IMR-90 (cell line): ENCODE measurements at regions of chr5 and their contacts with region 1.

Region 1: DNA sequence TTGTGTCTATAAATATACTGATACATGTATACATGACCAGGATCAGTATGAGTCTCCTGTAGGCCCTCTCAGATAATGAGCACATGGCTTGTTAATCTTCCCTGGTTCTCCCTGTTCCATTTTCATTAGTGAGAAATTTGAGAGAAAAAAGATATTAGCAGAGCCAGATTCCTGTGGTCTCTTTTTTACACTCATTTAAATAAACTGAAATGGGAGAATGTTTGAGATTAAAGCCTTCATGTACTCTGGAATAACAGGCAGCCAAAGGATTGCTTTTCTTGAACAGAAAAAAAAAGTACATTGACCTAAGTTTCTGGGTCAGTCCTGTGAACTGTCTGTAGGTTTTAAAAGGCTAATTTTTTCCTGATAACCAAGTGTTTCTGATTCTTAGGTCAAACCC is 44.2 kb downstream of the PWWP2A start:
- DNase-seq: peak; percentile 36
- ATAC-seq: peak; percentile 67
- H3K4me3 ChIP-seq: no peak overlapping the region
- H3K27ac ChIP-seq: no peak overlapping the region
- H3K4me1 ChIP-seq: peaks cover 5% of the 10 kb centered on the region
- H3K27me3 ChIP-seq: no peaks in the 10 kb centered on the region
- CTCF ChIP-seq: no peak
- POLR2A ChIP-seq: no peak
- RAD21 ChIP-seq: no peak

Region 2: DNA sequence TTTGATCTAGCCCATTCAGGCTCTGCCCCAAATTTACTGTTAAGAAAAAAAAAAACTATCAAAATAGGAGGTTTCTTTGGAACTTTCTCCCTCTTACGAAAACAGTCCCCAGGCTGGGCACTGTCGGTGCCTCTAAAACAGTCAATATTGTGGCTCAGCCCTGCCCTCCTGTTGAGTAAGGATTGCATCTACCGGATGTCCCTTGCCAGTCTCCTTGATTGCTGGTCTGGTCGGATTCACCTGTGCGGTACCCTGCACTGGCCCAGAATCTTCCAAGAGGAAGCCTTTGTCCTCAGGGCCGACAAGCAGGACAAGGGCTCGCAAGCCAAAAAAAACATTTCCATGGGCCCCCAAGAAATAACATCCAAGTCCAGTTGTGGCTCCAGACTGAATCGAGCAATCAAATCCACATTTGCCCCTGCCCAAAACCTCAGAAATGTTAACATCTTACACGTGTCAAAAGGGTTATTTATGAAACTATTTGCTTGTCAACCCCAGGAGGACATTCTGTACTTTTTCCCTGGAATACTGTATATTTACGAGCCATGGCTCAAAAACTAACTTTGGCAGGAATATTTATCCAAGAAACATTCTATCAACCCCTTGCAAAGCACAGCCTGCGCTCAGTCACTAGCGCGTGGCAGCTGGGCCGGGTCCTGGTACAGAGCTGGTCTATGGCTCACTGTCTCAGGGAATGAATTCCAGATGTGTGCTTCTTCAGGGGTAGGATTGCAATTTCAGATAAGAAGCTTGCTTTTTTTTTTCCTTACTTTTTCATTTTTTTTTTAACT is 288.0 kb before region 1 on chr5:
- CTCF ChIA-PET with region 1: no interaction called
- POLR2A ChIA-PET with region 1: no interaction called
- dilution Hi-C with region 1: no loop called
- in situ Hi-C with region 1: no loop called
- intact Hi-C with region 1: no loop called
- DNase-seq: peak; percentile 70
- ATAC-seq: peak; percentile 84
- H3K4me3 ChIP-seq: no peak overlapping the region
- H3K27ac ChIP-seq: no peak overlapping the region
- H3K4me1 ChIP-seq: peaks cover 5% of the 10 kb centered on the region
- H3K27me3 ChIP-seq: no peaks in the 10 kb centered on the region
- CTCF ChIP-seq: no peak
- POLR2A ChIP-seq: no peak
- RAD21 ChIP-seq: 0 out of 2 replicates have a peak, but pooled peaks have one; percentile 4

Region 3: DNA sequence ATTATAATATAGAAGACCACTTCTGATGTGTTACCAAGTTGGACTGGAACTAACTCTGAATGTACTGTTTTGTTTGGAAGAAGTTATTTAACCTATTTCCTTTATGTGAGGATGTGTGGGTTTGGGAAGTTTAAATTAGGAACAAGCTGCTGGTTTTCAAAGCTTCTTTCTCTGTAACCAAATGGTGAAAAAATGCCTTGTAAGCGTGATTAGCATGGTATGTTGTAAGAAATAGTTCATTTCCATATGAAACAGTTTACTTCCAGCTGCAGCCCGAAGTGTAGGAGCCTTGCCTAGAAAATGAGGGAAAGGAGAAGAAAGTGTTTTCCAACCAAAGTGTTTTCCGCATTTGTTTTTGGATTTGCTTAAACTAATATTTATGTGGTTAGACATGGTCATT is 30.1 kb before region 1 on chr5:
- CTCF ChIA-PET with region 1: no interaction called
- POLR2A ChIA-PET with region 1: no interaction called
- dilution Hi-C with region 1: no loop called
- in situ Hi-C with region 1: no loop called
- intact Hi-C with region 1: loop called (anchors 5 kb)
- DNase-seq: no peak
- ATAC-seq: no peak
- H3K4me3 ChIP-seq: no peak overlapping the region
- H3K27ac ChIP-seq: no peak overlapping the region
- H3K4me1 ChIP-seq: no peaks in the 10 kb centered on the region
- H3K27me3 ChIP-seq: no peaks in the 10 kb centered on the region
- CTCF ChIP-seq: no peak
- POLR2A ChIP-seq: no peak
- RAD21 ChIP-seq: no peak

Region 4: GRCh38 chr5:160260881-160261815 is 186.1 kb after region 1 on chr5:
- CTCF ChIA-PET with region 1: no interaction called
- POLR2A ChIA-PET with region 1: no interaction called
- dilution Hi-C with region 1: no loop called
- in situ Hi-C with region 1: no loop called
- intact Hi-C with region 1: no loop called
- DNase-seq: peak; percentile 99
- ATAC-seq: peak; percentile 99
- H3K4me3 ChIP-seq: no peak overlapping the region
- H3K27ac ChIP-seq: peak overlapping the region; percentile 25
- H3K4me1 ChIP-seq: peaks cover 20% of the 10 kb centered on the region
- H3K27me3 ChIP-seq: no peaks in the 10 kb centered on the region
- CTCF ChIP-seq: no peak
- POLR2A ChIP-seq: no peak; the same call in 1 of the 2 replicates
- RAD21 ChIP-seq: peak; percentile 9; the same call in 1 of the 2 replicates

Region 5: DNA sequence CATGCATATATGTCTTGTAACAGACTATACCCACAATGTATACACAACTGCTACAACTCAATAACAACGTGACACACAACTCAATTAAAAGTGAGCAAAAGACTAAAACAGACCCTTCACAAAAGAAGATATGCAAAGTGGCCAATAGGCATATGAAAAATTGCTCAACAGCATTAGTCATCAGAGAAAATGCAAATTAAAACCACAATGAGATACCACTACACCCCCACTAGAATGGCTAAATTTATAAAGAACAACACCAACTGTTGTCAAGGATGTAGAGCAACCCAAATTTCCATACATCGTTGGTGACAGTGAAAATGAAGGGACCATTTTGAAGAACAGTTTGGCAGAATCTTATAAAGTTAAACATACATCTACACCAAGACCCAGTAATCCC is 1432.5 kb after region 1 on chr5:
- CTCF ChIA-PET with region 1: no interaction called
- POLR2A ChIA-PET with region 1: no interaction called
- dilution Hi-C with region 1: no loop called
- in situ Hi-C with region 1: no loop called
- intact Hi-C with region 1: no loop called
- DNase-seq: no peak
- ATAC-seq: no peak
- H3K4me3 ChIP-seq: no peak overlapping the region
- H3K27ac ChIP-seq: no peak overlapping the region
- H3K4me1 ChIP-seq: no peaks in the 10 kb centered on the region
- H3K27me3 ChIP-seq: no peaks in the 10 kb centered on the region
- CTCF ChIP-seq: no peak
- POLR2A ChIP-seq: no peak
- RAD21 ChIP-seq: no peak